Mammary epithelial cell (primary cell): ENCODE measurements at regions of chr17 and their contacts with region 1.

Region 1: GRCh38 chr17:77109764-77110359 is 30.9 kb upstream of the SEC14L1 start:
- DNase-seq: no peak
- H3K4me3 ChIP-seq: no peak overlapping the region
- H3K27ac ChIP-seq: no peak overlapping the region
- H3K4me1 ChIP-seq: peaks cover 10% of the 10 kb centered on the region
- H3K27me3 ChIP-seq: no peaks in the 10 kb centered on the region
- CTCF ChIP-seq: no peak

Region 2: GRCh38 chr17:76781056-76781982 is 328.5 kb before region 1 on chr17:
- CTCF ChIA-PET with region 1: no interaction called
- dilution Hi-C with region 1: no loop called
- in situ Hi-C with region 1: no loop called
- intact Hi-C with region 1: no loop called
- DNase-seq: no peak
- H3K4me3 ChIP-seq: no peak overlapping the region
- H3K27ac ChIP-seq: no peak overlapping the region
- H3K4me1 ChIP-seq: no peaks in the 10 kb centered on the region
- H3K27me3 ChIP-seq: no peaks in the 10 kb centered on the region
- CTCF ChIP-seq: peak in 1 of 2 donors; percentile 11

Region 3: GRCh38 chr17:77131904-77132303 is 22.0 kb after region 1 on chr17:
- CTCF ChIA-PET with region 1: no interaction called
- dilution Hi-C with region 1: no loop called
- in situ Hi-C with region 1: no loop called
- intact Hi-C with region 1: no loop called
- DNase-seq: peak; percentile 73
- H3K4me3 ChIP-seq: no peak overlapping the region
- H3K27ac ChIP-seq: peak overlapping the region; percentile 84
- H3K4me1 ChIP-seq: peaks cover 47% of the 10 kb centered on the region
- H3K27me3 ChIP-seq: no peaks in the 10 kb centered on the region
- CTCF ChIP-seq: no peak

Region 4: GRCh38 chr17:77155125-77155524 is 45.3 kb after region 1 on chr17:
- CTCF ChIA-PET with region 1: no interaction called
- dilution Hi-C with region 1: loop called (anchors 5 kb)
- in situ Hi-C with region 1: no loop called
- intact Hi-C with region 1: no loop called
- DNase-seq: no peak
- H3K4me3 ChIP-seq: no peak overlapping the region
- H3K27ac ChIP-seq: no peak overlapping the region
- H3K4me1 ChIP-seq: peaks cover 15% of the 10 kb centered on the region
- H3K27me3 ChIP-seq: no peaks in the 10 kb centered on the region
- CTCF ChIP-seq: no peak

Region 5: GRCh38 chr17:77190576-77190975 is 80.7 kb after region 1 on chr17:
- CTCF ChIA-PET with region 1: no interaction called
- dilution Hi-C with region 1: loop called (anchors 10 kb)
- in situ Hi-C with region 1: no loop called
- intact Hi-C with region 1: no loop called
- DNase-seq: no peak
- H3K4me3 ChIP-seq: no peak overlapping the region
- H3K27ac ChIP-seq: no peak overlapping the region
- H3K4me1 ChIP-seq: peaks cover 5% of the 10 kb centered on the region
- H3K27me3 ChIP-seq: no peaks in the 10 kb centered on the region
- CTCF ChIP-seq: no peak

Region 6: DNA sequence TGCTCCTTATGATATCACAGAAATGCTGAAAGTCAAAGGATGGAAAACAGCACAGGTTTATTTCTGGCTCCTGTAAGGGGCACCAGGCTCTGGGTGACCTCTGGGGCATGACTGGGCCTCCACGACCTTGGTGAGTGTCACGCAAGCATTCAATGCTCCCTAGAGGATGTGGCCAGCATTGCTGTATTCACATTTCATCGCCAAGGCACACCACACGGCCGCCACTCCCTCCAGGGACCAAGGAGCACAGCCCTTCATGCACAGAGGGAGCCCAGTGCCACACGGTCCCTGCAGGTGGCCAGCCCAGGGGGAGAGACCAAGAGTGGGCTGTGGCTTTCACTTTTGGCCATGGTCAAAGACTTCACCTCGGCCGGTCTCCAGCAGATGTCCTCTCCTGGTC is 711.2 kb after region 1 on chr17:
- CTCF ChIA-PET with region 1: no interaction called
- dilution Hi-C with region 1: no loop called
- in situ Hi-C with region 1: no loop called
- intact Hi-C with region 1: no loop called
- DNase-seq: no peak
- H3K4me3 ChIP-seq: no peak overlapping the region
- H3K27ac ChIP-seq: no peak overlapping the region
- H3K4me1 ChIP-seq: no peaks in the 10 kb centered on the region
- H3K27me3 ChIP-seq: peaks cover 2% of the 10 kb centered on the region
- CTCF ChIP-seq: no peak